Heart left ventricle (tissue), 16 donors: ENCODE measurements at regions of chr20 and their contacts with region 1.

Region 1: DNA sequence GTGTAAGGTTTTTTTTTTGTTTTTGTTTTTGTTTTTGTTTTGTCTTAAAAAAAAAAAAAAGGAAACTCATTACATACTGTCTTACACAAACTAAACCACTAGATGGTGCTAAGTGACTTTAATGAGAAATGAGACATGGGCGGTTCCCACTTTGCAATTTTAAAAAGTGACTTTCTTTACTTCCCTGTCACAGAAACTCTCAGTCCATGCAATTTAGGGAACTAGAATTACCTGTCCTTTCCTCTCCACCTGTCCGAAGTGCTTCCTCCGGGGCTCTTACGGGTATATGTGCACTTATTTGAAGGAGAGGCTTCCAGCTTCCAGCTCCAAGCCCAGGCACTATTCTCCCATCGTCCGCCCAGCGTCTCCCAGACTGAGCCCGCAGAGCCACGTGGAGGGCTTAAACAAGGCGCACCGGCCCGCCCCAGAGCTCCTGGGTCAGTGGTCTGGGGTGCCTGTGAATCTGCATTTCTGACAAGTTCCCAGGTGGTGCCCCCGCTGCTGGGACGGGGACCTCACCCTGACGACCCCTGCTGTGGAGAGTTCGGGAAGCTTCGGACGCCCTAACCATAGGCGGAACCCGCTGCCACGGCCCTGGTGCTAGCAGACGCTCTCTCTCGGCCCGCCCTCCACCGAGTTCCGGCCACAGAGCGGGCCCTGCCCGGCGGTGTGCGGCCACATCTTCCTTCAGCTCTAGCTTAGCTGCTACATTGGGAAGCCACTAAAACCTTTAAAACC is 26.1 kb downstream of the BFSP1 start:
- DNase-seq: peak; percentile 54 to 85 (median 58)
- ATAC-seq: peak; percentile 59 to 87 (median 82)
- H3K4me3 ChIP-seq: peak overlapping the region; percentile 24 to 65 (median 54)
- H3K27ac ChIP-seq: peak overlapping the region in 8 of 12 donors; percentile 5 to 65 (median 32)
- H3K4me1 ChIP-seq: peaks cover 0 to 19% (median 5%) of the 10 kb centered on the region in 12 donors
- H3K27me3 ChIP-seq: no peaks in the 10 kb centered on the region
- CTCF ChIP-seq: peak; percentile 47 to 83 (median 72)
- POLR2A ChIP-seq: no peak

Region 2: DNA sequence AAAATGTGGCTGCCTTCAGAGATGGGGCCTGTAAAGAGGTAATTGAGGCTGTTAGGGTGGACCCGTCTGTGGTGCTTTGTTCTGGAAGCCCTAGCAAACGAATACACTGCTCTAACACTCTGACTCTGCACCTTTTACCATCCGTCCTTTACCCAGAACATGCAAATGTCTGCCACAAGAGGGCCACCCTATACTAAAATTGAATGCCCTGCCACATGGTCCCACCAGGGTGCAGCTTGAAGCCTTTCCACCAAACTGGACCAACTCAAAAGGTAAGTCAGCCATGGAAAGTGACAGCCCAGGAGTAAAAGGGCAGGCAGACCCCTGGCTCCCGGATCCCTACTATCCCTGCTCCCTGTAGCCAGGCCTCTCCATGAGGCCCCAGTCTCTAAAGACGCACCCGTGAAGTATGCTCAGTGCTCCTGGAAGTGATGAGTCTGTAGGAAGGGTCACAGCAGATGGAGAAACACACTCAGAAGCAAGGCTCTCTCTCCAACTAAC is 31.9 kb after region 1 on chr20:
- intact Hi-C with region 1: loop called in 1 of 10 experiments (anchors 1 kb)
- DNase-seq: peak in 4 of 5 donors; percentile 54 to 75 (median 69)
- ATAC-seq: peak; percentile 93 to 99 (median 98)
- H3K4me3 ChIP-seq: no peak overlapping the region
- H3K27ac ChIP-seq: peak overlapping the region in 2 of 12 donors; percentile 7 to 64
- H3K4me1 ChIP-seq: peaks cover 0 to 11% (median 0%) of the 10 kb centered on the region in 12 donors
- H3K27me3 ChIP-seq: no peaks in the 10 kb centered on the region
- CTCF ChIP-seq: peak; percentile 72 to 93 (median 88)
- POLR2A ChIP-seq: no peak

Region 3: GRCh38 chr20:17617551-17618223 is 112.6 kb after region 1 on chr20:
- intact Hi-C with region 1: loop called in 1 of 10 experiments (anchors 1 kb)
- DNase-seq: peak in 3 of 5 donors; percentile 66 to 73 (median 67)
- ATAC-seq: peak; percentile 45 to 63 (median 49)
- H3K4me3 ChIP-seq: no peak overlapping the region
- H3K27ac ChIP-seq: peak overlapping the region in 1 of 12 donors; percentile 4
- H3K4me1 ChIP-seq: peaks cover 0 to 49% (median 24%) of the 10 kb centered on the region in 12 donors
- H3K27me3 ChIP-seq: no peaks in the 10 kb centered on the region
- CTCF ChIP-seq: peak; percentile 57 to 88 (median 74)
- POLR2A ChIP-seq: no peak

Region 4: DNA sequence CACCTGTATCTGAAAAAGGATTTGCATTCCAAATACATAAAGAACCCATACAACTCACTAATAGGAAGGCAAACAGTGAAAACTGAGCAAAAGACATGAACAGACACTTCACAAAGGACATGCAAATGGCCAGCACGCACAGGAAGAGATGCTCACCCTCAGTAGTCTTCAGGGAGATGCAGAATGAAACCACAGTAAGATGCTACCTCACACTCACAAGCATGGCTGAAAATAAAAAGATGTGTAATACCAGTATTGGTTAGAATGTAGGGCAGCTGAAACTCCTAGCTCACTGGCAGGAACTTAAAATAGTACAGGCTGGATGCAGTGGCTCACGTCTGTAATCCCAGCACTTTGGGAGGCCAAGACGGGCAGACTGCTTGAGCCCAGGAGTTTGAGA is 399.0 kb after region 1 on chr20:
- intact Hi-C with region 1: loop called in 9 of 10 experiments (anchors 2 to 10 kb)
- DNase-seq: no peak
- ATAC-seq: no peak
- H3K4me3 ChIP-seq: no peak overlapping the region
- H3K27ac ChIP-seq: no peak overlapping the region
- H3K4me1 ChIP-seq: no peaks in the 10 kb centered on the region
- H3K27me3 ChIP-seq: no peaks in the 10 kb centered on the region
- CTCF ChIP-seq: no peak
- POLR2A ChIP-seq: no peak

Region 5: GRCh38 chr20:17995967-17996819 is 491.1 kb after region 1 on chr20:
- intact Hi-C with region 1: loop called (anchors 1 to 10 kb)
- DNase-seq: peak in 2 of 5 donors; percentile 25 to 38
- ATAC-seq: peak in 3 of 4 donors; percentile 52 to 82 (median 77)
- H3K4me3 ChIP-seq: no peak overlapping the region
- H3K27ac ChIP-seq: no peak overlapping the region
- H3K4me1 ChIP-seq: peaks cover 0 to 7% (median 0%) of the 10 kb centered on the region in 12 donors
- H3K27me3 ChIP-seq: no peaks in the 10 kb centered on the region
- CTCF ChIP-seq: peak; percentile 94 to 98 (median 96)
- POLR2A ChIP-seq: no peak

Region 6: DNA sequence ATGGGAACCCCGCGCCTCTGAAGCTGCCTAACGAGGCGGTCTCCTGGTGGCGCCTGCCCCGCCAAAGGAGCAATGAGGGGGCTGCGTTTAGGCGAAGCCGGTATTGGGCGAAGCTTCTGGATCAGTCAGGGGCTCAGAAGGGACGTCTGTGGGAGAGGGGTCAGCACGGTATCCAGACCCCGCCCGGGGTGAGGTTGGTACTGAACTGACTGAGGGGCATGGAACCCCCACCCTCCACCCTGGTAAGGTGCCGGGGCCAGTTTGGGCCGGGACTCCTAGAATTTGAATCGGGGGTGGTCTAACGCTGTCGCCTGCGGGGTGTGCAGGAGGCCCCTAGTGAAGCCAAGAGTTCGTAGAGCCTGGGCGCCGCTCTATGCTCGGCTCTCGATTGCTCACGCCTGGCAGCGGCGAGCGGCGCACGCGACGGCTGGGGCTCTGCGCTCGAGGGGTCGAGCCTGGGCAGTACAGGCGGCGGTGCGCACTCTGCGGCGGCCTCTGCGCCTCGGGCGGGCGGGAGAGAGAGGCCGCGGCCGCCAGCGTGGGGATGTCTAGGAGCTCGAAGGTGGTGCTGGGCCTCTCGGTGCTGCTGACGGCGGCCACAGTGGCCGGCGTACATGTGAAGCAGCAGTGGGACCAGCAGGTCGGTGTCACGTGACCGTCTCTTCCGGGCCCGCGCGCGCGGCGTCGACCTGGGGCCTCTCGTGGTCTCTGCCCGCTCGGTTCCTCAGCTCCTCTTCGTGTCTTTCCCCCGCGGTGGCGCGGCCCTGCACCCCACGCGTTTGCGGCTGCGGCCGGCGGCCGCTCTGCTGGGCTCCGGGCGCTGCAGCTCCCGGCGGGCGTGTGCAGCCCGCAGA is 632.6 kb after region 1 on chr20 and contains the starts of genes KAT14 and PET117:
- intact Hi-C with region 1: loop called in 1 of 10 experiments (anchors 10 kb)
- DNase-seq: peak; percentile 92 to 96 (median 93)
- ATAC-seq: peak; percentile 93 to 99 (median 98)
- H3K4me3 ChIP-seq: peak within 1 kb of the TSS; percentile 55 to 100 (median 92)
- H3K27ac ChIP-seq: peak within 1 kb of the TSS; percentile 69 to 97 (median 90)
- H3K4me1 ChIP-seq: peaks cover 0 to 24% (median 17%) of the 10 kb centered on the region in 12 donors
- H3K27me3 ChIP-seq: no peaks in the 10 kb centered on the region
- CTCF ChIP-seq: peak in 1 of 12 donors; percentile 5
- POLR2A ChIP-seq: peak in 1 of 2 donors; percentile 70
- total RNA-seq, gene KAT14: 8.3 to 12.3 (median 10.9) TPM
- total RNA-seq, gene PET117: 8.1 to 15.0 (median 11.9) TPM

Region 7: DNA sequence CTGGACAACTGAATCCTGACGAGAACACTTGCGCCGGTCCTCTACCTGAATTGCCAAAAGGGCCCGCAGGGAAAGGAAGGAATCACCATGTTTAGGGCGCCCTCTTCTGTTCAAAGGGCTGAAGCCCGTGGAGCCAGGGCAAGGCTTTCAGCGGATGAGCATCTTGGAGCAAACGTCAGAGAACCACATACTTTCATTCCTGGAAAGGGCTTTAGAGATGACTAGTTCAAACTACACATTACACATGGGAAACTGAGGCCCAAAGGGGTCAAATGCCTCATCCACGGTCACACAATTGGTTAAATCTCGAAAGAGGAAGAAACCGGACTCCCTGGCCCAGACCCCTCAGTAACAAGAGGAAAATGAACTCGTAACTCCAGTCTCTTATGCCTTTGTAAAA is 771.8 kb after region 1 on chr20:
- intact Hi-C with region 1: loop called in 7 of 10 experiments (anchors 5 to 10 kb)
- DNase-seq: peak in 4 of 5 donors; percentile 34 to 54 (median 44)
- ATAC-seq: peak in 3 of 4 donors; percentile 53 to 82 (median 81)
- H3K4me3 ChIP-seq: no peak overlapping the region
- H3K27ac ChIP-seq: no peak overlapping the region
- H3K4me1 ChIP-seq: peaks cover 0 to 4% (median 0%) of the 10 kb centered on the region in 12 donors
- H3K27me3 ChIP-seq: peaks cover 0 to 43% (median 13%) of the 10 kb centered on the region in 9 donors
- CTCF ChIP-seq: peak; percentile 33 to 79 (median 64)
- POLR2A ChIP-seq: no peak